PC-3 (cell line): ENCODE measurements at regions of chrX and their contacts with region 1.

Region 1: DNA sequence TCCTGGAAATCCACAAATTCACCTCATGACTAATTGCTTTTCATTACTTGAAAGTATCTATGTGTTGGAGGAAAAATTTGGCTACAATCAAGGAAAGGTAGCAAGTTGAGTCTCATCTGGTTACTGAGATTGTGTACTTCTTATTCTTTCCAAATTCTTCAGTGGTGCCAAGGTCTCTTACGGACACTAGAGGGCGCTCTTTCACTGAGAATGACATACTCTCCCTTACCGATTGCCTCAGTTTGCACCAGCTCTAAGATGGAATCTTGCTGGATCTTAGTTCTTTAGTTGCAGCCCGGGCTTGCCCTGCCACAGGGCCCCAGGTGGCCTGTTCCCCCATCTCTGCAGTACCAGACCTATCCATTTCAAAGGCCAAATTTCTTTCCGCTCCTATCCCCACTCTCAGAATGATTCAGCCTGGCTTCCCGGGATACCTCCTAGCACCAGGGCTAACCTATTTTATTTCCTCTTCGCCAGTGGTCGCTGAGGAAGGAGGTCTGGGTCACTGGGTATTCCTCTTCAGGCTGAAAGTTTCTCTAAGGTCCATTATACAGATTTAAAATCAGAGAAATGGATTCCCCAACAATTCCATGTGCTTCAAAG is 24.6 kb upstream of the GPR50 start:
- DNase-seq: peak; percentile 64
- ATAC-seq: peak; percentile 64
- H3K4me3 ChIP-seq: no peak overlapping the region
- H3K27ac ChIP-seq: no peak overlapping the region
- H3K4me1 ChIP-seq: no peaks in the 10 kb centered on the region
- H3K27me3 ChIP-seq: peaks cover 34% of the 10 kb centered on the region
- CTCF ChIP-seq: peak; percentile 86

Region 2: GRCh38 chrX:150935467-150935866 is 216.3 kb before region 1 on chrX:
- CTCF ChIA-PET with region 1: no interaction called
- POLR2A ChIA-PET with region 1: no interaction called
- intact Hi-C with region 1: no loop called
- DNase-seq: peak; percentile 31
- ATAC-seq: peak; percentile 41
- H3K4me3 ChIP-seq: no peak overlapping the region
- H3K27ac ChIP-seq: no peak overlapping the region
- H3K4me1 ChIP-seq: peaks cover 14% of the 10 kb centered on the region; the same call in 1 of the 2 replicates
- H3K27me3 ChIP-seq: no peaks in the 10 kb centered on the region
- CTCF ChIP-seq: no peak

Region 3: DNA sequence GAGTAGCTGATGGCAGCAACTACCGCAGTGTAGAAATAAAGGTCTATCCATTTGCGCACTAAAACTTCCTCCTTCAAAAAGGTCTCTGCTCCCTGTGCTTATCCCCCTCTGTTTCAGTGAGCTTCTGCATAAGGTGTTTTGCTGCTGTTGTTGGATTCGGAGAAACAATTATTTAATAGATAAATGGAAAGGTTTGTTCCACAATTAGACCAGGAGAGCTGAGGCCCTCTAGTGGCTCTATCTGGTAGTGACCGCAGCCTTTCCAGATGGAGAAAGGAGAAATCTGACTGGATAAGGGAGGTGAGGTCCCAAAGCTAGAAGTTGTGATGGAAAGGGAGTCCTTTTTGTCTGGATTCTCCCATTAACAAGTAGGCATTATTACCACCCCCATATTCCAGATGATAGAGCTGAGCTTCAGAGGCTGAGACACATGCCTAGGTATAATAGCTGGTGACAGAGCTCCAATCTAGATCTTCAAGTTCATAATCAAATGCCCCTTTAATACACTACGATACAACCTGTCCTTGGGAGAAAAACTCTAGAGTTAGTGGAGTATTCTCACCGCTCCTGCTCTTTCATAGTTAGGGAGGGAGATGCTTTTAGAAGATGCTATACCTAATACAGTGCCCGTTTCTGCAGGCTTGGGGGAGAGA is 1480.8 kb after region 1 on chrX:
- CTCF ChIA-PET with region 1: no interaction called
- POLR2A ChIA-PET with region 1: no interaction called
- intact Hi-C with region 1: loop called (anchors 1 kb)
- DNase-seq: peak; percentile 69
- ATAC-seq: no peak
- H3K4me3 ChIP-seq: no peak overlapping the region
- H3K27ac ChIP-seq: no peak overlapping the region
- H3K4me1 ChIP-seq: no peaks in the 10 kb centered on the region
- H3K27me3 ChIP-seq: peaks cover 32% of the 10 kb centered on the region
- CTCF ChIP-seq: peak; percentile 81

Region 4: GRCh38 chrX:152821145-152821765 is 1669.5 kb after region 1 on chrX:
- CTCF ChIA-PET with region 1: no interaction called
- POLR2A ChIA-PET with region 1: no interaction called
- intact Hi-C with region 1: loop called (anchors 5 kb)
- DNase-seq: peak; percentile 65
- ATAC-seq: no peak
- H3K4me3 ChIP-seq: no peak overlapping the region
- H3K27ac ChIP-seq: no peak overlapping the region
- H3K4me1 ChIP-seq: peaks cover 60% of the 10 kb centered on the region
- H3K27me3 ChIP-seq: no peaks in the 10 kb centered on the region
- CTCF ChIP-seq: peak; percentile 80